Heart left ventricle (tissue), 16 donors: ENCODE measurements at regions of chr9 and their contacts with region 1.

Region 1: GRCh38 chr9:81529556-81530195 is 159.7 kb downstream of the TLE1 start:
- DNase-seq: no peak
- ATAC-seq: peak in 3 of 4 donors; percentile 72 to 81 (median 80)
- H3K4me3 ChIP-seq: no peak overlapping the region
- H3K27ac ChIP-seq: no peak overlapping the region
- H3K4me1 ChIP-seq: peaks cover 0 to 17% (median 0%) of the 10 kb centered on the region in 12 donors
- H3K27me3 ChIP-seq: no peaks in the 10 kb centered on the region
- CTCF ChIP-seq: no peak
- POLR2A ChIP-seq: no peak

Region 2: GRCh38 chr9:81431641-81432040 is 98.0 kb before region 1 on chr9:
- intact Hi-C with region 1: no loop called
- DNase-seq: no peak
- ATAC-seq: no peak
- H3K4me3 ChIP-seq: no peak overlapping the region
- H3K27ac ChIP-seq: no peak overlapping the region
- H3K4me1 ChIP-seq: peaks cover 0 to 12% (median 0%) of the 10 kb centered on the region in 12 donors
- H3K27me3 ChIP-seq: no peaks in the 10 kb centered on the region
- CTCF ChIP-seq: no peak
- POLR2A ChIP-seq: no peak

Region 3: DNA sequence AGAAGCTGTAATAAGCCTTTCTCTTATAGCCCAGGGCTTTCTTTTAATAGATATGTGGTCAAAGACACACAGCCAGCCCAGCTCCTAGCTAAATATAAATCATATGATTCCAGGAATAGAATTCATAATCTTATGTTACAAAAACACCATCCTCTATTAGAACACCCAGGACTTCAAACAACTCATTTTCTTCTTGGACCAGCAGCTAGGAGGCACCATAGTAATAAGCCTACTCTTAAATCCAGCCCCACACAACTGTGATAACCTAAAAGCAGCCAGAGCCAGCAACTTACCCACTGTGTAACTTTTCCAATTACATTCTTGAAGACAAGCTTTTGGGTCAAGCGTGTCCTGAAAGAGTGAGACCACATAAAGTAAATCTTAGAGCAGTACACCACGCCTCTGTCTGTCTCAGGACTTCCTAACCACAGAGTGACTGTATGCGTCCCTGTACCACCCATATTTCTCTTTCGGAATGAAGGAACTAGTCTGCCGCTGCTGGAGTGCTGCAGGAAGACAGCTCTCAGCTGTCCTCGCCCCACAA is 64.1 kb before region 1 on chr9:
- intact Hi-C with region 1: no loop called
- DNase-seq: peak in 1 of 5 donors; percentile 17
- ATAC-seq: peak; percentile 77 to 90 (median 90)
- H3K4me3 ChIP-seq: no peak overlapping the region
- H3K27ac ChIP-seq: peak overlapping the region in 1 of 12 donors; percentile 26
- H3K4me1 ChIP-seq: peaks cover 0 to 10% (median 0%) of the 10 kb centered on the region in 12 donors
- H3K27me3 ChIP-seq: no peaks in the 10 kb centered on the region
- CTCF ChIP-seq: peak in 6 of 12 donors; percentile 9 to 44 (median 26)
- POLR2A ChIP-seq: no peak

Region 4: DNA sequence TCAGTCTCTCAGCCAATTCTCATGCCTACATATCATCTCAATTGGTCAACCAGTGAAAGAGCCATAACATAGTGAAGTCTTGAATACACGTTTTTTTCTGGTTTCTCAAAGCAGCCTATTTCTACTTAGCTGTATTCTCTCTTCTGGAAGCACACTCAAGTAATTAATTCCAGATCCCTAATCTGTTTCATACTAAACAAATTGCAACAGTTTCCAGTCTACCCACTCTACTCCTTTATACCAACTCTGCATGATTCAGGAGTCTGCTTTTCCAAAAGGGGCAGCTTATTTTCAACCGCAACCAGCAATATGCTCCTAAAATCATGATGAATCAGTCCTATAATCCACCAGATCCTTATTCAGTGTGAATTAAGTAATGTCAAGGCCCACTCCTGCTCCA is 52.0 kb before region 1 on chr9:
- intact Hi-C with region 1: no loop called
- DNase-seq: no peak
- ATAC-seq: no peak
- H3K4me3 ChIP-seq: no peak overlapping the region
- H3K27ac ChIP-seq: no peak overlapping the region
- H3K4me1 ChIP-seq: peaks cover 0 to 4% (median 0%) of the 10 kb centered on the region in 12 donors
- H3K27me3 ChIP-seq: no peaks in the 10 kb centered on the region
- CTCF ChIP-seq: no peak
- POLR2A ChIP-seq: no peak

Region 5: DNA sequence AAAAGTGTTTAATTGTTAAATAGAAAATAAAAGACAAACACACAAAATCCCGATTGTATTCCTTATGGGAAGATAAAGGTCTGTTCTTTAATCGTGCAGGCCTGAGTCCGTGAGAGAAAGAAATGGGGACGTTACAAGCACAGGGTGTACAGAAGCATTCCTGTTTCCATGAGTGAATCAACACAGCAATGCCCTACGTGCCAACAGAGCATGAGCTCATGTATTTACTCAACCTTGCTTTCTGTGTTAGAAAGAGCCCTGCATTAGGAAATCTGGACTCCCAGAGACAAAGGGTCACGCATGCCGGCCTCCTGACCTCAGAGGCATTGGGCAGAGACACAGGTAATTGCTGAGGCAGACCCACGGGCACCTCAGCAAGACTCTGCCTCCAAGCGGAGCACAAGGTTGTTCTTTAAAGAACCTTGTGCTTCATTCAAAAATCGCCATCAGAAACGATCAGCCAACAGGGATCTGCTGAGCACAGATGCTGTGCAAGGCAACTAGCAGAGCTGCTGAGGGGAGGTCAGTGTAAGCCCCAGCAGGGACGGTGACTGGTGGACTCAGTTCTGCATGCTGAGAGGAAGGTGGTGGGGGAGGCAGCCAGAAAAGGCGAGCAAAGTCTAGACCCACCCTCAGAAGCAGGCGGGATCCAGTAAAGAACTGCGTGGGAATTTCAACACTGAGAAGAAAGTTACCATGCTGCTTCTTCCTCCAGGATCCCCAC is 58.6 kb after region 1 on chr9:
- intact Hi-C with region 1: loop called in 2 of 10 experiments (anchors 2 to 10 kb)
- DNase-seq: no peak
- ATAC-seq: peak; percentile 46 to 80 (median 72)
- H3K4me3 ChIP-seq: no peak overlapping the region
- H3K27ac ChIP-seq: peak overlapping the region in 2 of 12 donors; percentile 28 to 40
- H3K4me1 ChIP-seq: peaks cover 0 to 26% (median 9%) of the 10 kb centered on the region in 12 donors
- H3K27me3 ChIP-seq: no peaks in the 10 kb centered on the region
- CTCF ChIP-seq: no peak
- POLR2A ChIP-seq: no peak

Region 6: DNA sequence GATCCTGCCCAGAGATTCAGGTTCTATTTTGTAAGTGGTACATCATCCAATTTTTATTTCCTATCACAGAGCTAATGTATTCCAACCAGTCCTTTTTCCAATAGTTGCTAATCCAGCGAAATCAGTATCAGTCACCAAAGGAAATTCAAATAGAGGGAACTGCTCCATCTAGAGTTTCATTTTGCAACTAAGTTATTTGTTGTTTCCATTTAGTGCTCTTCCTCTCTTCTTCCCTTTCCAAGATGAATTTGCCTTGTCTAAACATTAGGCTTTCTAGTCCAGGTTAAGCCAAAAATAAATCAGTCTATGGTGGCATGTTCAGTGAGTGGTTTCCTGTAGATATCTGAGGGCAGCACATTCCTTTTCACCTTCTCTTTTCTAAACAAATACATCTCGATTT is 318.8 kb after region 1 on chr9:
- intact Hi-C with region 1: loop called in 5 of 10 experiments (anchors 5 to 10 kb)
- DNase-seq: no peak
- ATAC-seq: no peak
- H3K4me3 ChIP-seq: no peak overlapping the region
- H3K27ac ChIP-seq: no peak overlapping the region
- H3K4me1 ChIP-seq: peaks cover 0 to 16% (median 9%) of the 10 kb centered on the region in 12 donors
- H3K27me3 ChIP-seq: peaks cover 0 to 4% (median 0%) of the 10 kb centered on the region in 9 donors
- CTCF ChIP-seq: peak in 11 of 12 donors; percentile 17 to 60 (median 32)
- POLR2A ChIP-seq: no peak

Region 7: DNA sequence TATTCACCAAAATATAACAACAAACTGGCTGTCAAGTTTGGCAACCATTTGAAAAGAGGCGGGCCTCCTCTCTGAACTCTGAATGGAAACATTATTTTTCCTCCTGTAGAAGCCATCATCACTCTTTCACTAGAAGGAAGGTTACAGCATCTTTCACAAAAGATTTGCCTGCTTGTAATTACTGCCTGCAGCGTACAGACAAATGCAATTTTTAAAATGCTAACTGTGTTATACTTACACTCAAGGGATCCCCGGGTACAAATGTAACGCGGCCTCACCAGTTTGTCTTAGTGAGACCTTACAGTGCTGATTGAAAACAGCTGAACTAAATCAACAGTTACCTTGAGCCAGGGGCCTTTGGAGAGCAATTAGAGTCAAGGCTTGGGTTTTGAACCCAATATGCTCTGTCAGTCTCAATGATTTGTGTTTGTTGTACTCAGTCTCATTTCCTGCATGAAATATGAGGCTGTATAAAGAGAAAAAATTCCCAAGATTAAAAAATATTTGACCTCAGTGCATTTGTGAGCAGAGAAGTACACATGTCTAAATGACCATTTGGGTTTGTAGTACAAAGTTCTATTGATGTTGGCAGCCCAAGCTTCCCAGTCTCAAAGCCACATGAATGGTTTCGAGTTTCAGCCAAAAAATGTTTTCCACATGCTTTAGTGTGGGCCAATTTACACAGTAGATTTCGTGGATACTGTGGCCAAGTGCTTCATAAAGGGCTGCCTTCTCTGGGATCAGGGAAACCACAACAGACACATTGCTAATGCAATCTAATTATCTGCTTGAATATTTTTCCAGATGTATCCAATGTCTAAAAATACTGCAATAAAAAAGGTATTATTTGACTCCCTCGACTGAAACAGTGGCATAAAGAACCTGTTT is 958.9 kb after region 1 on chr9:
- intact Hi-C with region 1: loop called in 1 of 10 experiments (anchors 10 kb)
- DNase-seq: peak in 3 of 5 donors; percentile 41 to 57 (median 55)
- ATAC-seq: peak; percentile 79 to 92 (median 86)
- H3K4me3 ChIP-seq: peak overlapping the region in 1 of 12 donors; percentile 1
- H3K27ac ChIP-seq: peak overlapping the region; percentile 64 to 86 (median 76)
- H3K4me1 ChIP-seq: peaks cover 0 to 31% (median 16%) of the 10 kb centered on the region in 12 donors
- H3K27me3 ChIP-seq: no peaks in the 10 kb centered on the region
- CTCF ChIP-seq: no peak
- POLR2A ChIP-seq: no peak